Right cardiac atrium (tissue), 5 donors: ENCODE measurements at regions of chr15 and their contacts with region 1.

Region 1: DNA sequence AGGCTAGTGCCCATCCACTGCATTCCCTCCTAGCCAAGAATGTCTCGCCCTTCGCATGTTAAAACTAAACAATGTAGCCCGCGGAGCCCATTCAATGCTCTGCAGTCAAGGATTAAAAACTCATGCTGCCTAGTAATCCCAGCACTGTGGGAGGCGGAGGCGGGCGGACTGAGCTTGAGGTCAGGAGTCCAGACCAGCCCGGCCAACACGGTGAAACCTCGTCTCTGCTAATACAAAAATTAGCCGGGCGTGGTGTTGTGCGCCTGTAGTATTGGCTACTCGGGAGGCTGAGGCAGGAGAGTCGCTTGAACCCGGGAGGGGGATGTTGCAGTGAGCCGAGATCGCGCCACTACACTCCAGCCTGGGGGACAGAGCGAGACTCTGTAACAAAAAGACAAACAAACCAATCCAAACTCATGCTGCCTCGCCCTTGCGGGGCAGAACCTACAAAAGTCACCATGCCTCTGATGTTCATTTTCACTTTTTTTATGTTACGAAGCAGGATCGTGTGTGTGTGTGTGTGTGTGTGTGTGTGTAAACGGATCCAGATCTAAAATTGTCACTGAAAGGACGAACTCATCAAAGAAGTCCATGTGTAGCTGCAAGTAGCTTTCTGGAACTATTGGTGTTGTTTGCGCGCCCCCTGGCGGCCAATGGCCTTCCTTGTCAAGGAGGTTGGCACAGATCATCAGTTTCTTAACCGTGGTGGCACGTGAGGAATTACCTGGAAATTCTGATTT is 54.8 kb upstream of the SPESP1 start:
- DNase-seq: peak; percentile 92 to 97 (median 96)
- ATAC-seq: peak; percentile 93 to 95
- H3K4me3 ChIP-seq: peak overlapping the region; percentile 23
- H3K27ac ChIP-seq: no peak overlapping the region
- H3K4me1 ChIP-seq: no peaks in the 10 kb centered on the region
- H3K27me3 ChIP-seq: no peaks in the 10 kb centered on the region

Region 2: DNA sequence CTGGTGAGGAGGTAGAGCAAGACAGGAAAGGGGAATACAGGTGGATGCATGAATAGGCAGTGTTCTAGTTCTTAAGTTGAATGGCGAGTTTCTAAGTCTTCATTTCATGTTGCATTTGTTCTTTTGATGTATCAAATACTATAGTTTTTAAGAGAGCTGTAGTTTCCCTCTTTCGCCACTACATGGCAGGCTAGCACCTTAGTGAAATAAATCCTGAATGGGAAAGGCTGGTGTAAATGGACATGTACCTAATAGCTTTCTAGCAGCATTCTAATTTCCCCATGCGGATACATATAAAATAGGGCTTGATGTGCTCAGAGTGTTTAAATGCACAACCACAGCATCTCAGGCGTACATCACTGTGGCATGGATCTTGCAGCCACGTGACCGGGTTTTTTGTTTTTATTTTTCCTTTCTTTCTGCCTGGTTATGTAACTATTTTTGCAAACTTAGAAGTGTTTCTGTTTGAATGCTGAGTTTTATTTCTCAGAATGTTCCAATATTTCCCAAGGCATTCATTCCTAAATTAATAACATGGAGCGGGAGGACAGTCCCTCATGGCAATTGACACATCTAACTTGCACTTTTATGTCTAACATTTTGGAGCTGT is 622.5 kb before region 1 on chr15:
- intact Hi-C with region 1: loop called in 1 of 4 experiments (anchors 10 kb)
- DNase-seq: no peak
- ATAC-seq: peak; percentile 43 to 52
- H3K4me3 ChIP-seq: no peak overlapping the region
- H3K27ac ChIP-seq: no peak overlapping the region
- H3K4me1 ChIP-seq: no peaks in the 10 kb centered on the region
- H3K27me3 ChIP-seq: no peaks in the 10 kb centered on the region

Region 3: DNA sequence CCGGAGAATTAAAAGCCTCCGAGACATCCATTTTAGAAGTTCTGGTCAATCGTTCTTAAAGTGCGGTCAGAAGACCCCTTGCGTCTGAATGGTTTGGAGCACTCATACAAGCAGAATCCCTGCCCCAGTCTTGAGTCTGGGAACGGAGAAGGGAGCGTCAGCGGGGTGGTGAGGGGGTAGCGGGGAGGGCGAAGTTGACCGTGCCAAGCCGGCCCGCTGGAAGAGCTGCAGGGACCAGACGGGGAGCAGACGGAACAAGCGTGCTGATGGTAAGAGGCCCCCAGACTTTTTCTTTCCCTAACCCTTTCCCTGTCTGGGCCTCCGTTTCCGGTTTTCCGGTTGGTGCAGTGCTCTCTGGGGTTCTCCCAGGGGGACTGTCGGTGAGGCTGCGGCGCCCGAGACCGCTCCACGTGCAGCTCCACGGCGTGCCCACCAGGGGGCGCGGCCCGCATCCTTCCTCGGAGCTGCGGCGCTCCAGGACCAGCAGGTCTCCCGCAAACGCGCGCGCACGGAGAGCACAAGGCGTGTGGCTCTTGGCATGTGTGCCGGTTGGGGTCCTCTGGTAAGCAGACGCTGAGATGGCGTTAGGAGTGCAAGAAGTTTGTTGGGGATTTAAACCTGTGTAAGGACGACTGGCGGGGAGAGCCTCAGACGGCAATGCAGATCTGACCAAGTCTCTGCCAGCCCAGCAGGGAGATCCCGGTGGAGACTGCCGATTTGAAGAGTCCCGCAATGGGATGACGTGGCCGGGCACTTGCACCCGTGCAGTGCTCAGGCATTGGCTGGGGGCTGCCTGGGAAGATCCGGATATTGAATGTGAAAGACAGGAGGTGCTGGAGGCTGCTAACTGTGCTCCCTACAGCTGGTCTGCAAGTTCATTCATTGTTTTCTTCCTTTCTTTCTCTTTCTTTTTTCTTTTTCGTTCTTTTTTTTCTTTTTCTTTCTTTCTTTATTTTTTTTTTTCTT is 315.9 kb before region 1 on chr15:
- intact Hi-C with region 1: loop called (anchors 2 to 5 kb)
- DNase-seq: peak; percentile 82 to 94 (median 93)
- ATAC-seq: peak; percentile 91 to 94
- H3K4me3 ChIP-seq: peak overlapping the region; percentile 26
- H3K27ac ChIP-seq: no peak overlapping the region
- H3K4me1 ChIP-seq: no peaks in the 10 kb centered on the region
- H3K27me3 ChIP-seq: no peaks in the 10 kb centered on the region

Region 4: GRCh38 chr15:68679961-68680371 is 195.6 kb before region 1 on chr15:
- intact Hi-C with region 1: loop called in 2 of 4 experiments (anchors 10 kb)
- DNase-seq: no peak
- ATAC-seq: no peak
- H3K4me3 ChIP-seq: no peak overlapping the region
- H3K27ac ChIP-seq: no peak overlapping the region
- H3K4me1 ChIP-seq: peaks cover 3% of the 10 kb centered on the region
- H3K27me3 ChIP-seq: no peaks in the 10 kb centered on the region

Region 5: GRCh38 chr15:68783226-68784058 is 92.1 kb before region 1 on chr15:
- intact Hi-C with region 1: loop called in 1 of 4 experiments (anchors 10 kb)
- DNase-seq: peak in 1 of 3 donors; percentile 76
- ATAC-seq: peak; percentile 12 to 16
- H3K4me3 ChIP-seq: no peak overlapping the region
- H3K27ac ChIP-seq: no peak overlapping the region
- H3K4me1 ChIP-seq: no peaks in the 10 kb centered on the region
- H3K27me3 ChIP-seq: no peaks in the 10 kb centered on the region